Prostate gland (tissue), 2 donors: ENCODE measurements at regions of chr9 and their contacts with region 1.

Region 1: DNA sequence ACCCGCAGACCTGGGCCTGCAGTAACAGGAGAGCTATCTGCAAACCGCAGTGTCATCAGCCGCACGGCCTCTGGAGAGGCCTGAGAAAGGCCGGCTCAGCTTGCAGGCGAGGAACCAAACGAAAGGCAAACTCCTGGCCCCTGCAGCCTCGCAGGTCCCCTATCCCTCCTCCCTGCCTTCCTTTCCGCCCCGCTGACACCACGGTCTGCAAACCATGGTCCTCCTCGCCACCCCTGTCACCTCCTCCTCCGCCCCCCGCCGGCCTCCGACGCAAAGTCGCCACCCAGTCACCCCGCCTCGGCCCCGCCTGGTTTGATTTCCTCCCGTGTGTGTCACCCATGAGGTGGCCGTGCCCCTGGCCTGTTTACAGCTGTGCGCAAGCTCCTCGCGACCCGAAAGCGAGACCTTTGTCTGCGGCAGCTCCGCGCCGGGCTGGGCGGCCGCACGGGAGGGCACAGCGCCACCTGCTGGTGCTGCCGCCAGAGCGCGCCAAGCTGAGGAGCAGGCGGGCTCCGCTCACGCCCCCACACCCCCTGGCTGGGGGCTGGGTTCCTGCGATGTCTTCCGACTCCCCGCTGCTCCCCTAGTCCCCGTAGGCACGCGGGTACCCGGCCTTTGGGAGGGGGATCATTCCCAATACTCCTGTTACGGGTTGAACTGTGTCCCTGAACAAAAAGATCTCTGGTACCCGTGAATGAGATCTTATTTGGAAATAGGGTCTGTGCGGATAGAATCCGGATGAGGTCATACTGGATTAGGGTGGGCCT is 19.4 kb downstream of the GBGT1 start:
- DNase-seq: peak; percentile 47
- H3K4me3 ChIP-seq: peak overlapping the region; percentile 14 to 21
- H3K27ac ChIP-seq: no peak overlapping the region
- H3K4me1 ChIP-seq: peaks cover 9% of the 10 kb centered on the region
- H3K27me3 ChIP-seq: no peaks in the 10 kb centered on the region
- CTCF ChIP-seq: peak; percentile 96 to 99 (median 97)
- POLR2A ChIP-seq: peak; percentile 40

Region 2: GRCh38 chr9:133004091-133004998 is 140.0 kb before region 1 on chr9:
- intact Hi-C with region 1: no loop called
- DNase-seq: no peak
- H3K4me3 ChIP-seq: no peak overlapping the region
- H3K27ac ChIP-seq: no peak overlapping the region
- H3K4me1 ChIP-seq: no peaks in the 10 kb centered on the region
- H3K27me3 ChIP-seq: peaks cover 3% of the 10 kb centered on the region
- CTCF ChIP-seq: no peak
- POLR2A ChIP-seq: no peak

Region 3: DNA sequence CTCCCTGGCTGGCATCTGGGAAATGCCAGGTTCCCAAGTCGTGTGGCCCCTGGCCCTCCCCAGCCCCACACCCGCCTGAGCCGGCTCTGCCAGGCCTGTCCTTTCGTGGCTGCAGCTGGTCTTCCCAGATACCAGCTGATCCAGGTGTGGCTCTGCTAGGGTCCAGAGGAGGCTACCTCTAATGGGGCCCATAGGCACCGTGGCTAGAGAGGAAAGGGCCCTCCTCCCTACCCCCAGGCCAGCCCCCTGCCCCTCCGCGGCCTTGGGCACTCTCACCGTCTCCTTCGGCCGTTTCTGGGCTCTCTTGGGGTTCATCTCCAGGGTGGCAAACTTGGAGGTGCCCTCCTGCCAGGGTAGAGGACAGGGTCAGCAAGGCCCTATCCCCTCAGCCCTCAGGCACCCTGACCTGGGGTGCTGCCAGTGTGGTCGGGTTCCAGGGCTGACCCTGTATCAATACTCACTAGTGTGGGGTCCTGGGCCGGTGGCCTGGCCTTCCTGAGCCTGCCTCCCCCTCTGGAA is 40.3 kb before region 1 on chr9:
- intact Hi-C with region 1: loop called (anchors 1 kb)
- DNase-seq: no peak
- H3K4me3 ChIP-seq: no peak overlapping the region
- H3K27ac ChIP-seq: no peak overlapping the region
- H3K4me1 ChIP-seq: no peaks in the 10 kb centered on the region
- H3K27me3 ChIP-seq: no peaks in the 10 kb centered on the region
- CTCF ChIP-seq: no peak
- POLR2A ChIP-seq: no peak

Region 4: GRCh38 chr9:133121198-133121939 is 23.0 kb before region 1 on chr9 and contains the start of gene RALGDS:
- intact Hi-C with region 1: loop called (anchors 2 kb)
- DNase-seq: peak; percentile 89
- H3K4me3 ChIP-seq: peak within 1 kb of the TSS; percentile 65 to 68
- H3K27ac ChIP-seq: peak within 1 kb of the TSS; percentile 85
- H3K4me1 ChIP-seq: peaks cover 29% of the 10 kb centered on the region
- H3K27me3 ChIP-seq: no peaks in the 10 kb centered on the region
- CTCF ChIP-seq: no peak
- POLR2A ChIP-seq: peak; percentile 4
- total RNA-seq, gene RALGDS: 49.6 to 77.4 TPM

Region 5: DNA sequence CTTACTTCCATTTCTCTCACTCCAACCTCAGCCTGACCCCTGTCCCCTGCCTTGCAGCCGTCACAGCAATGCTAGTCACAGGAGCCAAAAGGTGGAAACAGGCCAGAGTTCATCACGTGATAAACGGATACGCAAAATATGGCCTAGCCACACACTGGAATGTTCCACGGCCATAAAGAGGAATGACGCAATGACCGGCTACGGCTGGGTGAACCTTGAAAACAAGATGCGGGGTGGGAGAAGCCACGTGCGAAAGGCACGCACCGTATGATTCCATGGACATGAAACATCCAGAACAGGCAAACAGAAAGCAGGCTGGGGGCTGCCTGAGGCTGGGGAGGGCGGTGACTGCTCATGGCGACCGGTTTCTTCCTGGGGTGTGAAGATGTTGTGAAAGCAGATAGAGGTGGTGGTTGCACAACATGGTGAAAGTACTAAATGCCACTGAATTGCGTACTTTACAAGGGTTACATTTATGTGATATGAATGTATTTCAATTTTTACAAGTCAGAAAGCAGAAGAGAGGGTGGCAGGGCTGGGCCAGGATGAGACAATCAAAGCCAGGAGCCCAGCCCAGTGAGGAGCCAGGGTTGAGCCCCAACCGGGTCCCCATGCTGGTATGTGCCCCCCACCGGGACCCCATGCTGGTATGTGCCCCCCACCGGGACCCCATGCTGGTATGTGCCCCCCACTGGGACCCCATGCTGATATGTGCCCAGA is 711.6 kb after region 1 on chr9:
- intact Hi-C with region 1: no loop called
- DNase-seq: no peak
- H3K4me3 ChIP-seq: no peak overlapping the region
- H3K27ac ChIP-seq: no peak overlapping the region
- H3K4me1 ChIP-seq: no peaks in the 10 kb centered on the region
- H3K27me3 ChIP-seq: no peaks in the 10 kb centered on the region
- CTCF ChIP-seq: no peak
- POLR2A ChIP-seq: no peak